Caco-2 (cell line): ENCODE measurements at regions of chr11 and their contacts with region 1.

Region 1: DNA sequence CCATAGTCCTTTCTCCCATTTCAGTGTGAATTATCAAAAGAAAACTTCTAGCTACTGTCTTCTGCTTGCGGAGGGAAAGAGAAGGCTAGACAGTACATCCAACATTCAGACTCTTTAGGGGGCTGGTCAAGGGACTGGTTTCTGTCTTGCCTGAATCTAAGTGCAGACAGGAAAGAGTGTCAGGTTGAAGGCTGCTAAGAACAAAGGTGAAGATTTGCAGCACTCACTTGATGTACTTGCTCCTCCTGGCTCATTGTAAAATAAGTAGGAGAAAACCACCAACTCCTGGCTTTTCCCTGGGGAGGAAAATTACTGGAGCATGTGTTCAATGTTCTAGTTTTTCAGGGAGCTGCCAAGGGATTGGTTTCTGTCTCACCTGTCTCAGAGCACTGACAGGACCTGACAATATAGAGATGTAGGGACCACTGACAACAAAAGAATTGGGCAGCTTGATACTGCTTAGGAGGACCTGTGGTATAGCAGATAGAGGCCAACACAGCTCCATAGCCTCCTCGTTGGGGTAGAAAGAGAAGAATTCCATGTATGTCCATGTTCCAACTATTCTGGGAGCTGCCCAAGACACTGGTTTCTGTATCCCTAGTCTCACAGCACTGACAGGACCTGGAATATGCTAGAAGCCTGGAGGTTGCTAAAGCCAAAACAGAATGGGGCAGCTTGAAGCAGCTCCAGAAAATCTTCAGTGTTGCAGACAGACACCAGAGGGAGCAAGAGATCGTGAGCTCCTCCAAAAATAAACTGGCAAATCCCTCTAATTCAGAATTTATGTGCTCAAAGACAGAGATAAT is 39.7 kb upstream of the MMP12 start:
- DNase-seq: peak in 1 of 2 experiments; percentile 58
- H3K4me3 ChIP-seq: no peak overlapping the region
- H3K4me3 Mint-ChIP-seq: no peak overlapping the region
- H3K27ac Mint-ChIP-seq: no peak overlapping the region
- H3K4me1 ChIP-seq: no peaks in the 10 kb centered on the region
- H3K4me1 Mint-ChIP-seq: no peaks in the 10 kb centered on the region
- H3K27me3 ChIP-seq: no peaks in the 10 kb centered on the region
- H3K27me3 Mint-ChIP-seq: no peaks in the 10 kb centered on the region
- CTCF ChIP-seq: peak; percentile 79 to 88

Region 2: DNA sequence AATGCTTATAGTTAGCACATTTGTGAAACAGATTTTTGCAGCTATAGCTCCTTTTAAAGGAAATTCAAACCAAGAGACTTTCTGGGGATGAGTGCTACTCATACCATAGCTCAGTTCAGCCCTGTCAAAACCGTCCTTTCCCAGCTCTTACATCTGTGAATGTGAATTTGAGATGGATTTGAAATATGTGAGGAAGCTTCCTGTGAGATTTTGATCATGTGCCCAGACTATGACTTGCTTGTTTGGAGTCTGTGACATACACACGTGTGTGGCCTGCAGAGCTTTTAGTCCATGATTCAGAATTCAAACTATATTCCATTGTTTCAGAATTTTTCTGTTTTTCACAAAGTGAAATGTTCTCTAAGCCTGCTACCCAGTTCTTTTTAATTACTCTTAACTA is 112.1 kb before region 1 on chr11:
- CTCF ChIA-PET with region 1: no interaction called
- POLR2A ChIA-PET with region 1: no interaction called
- intact Hi-C with region 1: no loop called
- DNase-seq: no peak
- H3K4me3 ChIP-seq: no peak overlapping the region
- H3K4me3 Mint-ChIP-seq: no peak overlapping the region
- H3K27ac Mint-ChIP-seq: no peak overlapping the region
- H3K4me1 ChIP-seq: 0 out of 2 replicates have a peak, but pooled peaks cover 5% of the 10 kb centered on the region
- H3K4me1 Mint-ChIP-seq: peaks cover 6% of the 10 kb centered on the region
- H3K27me3 ChIP-seq: no peaks in the 10 kb centered on the region
- H3K27me3 Mint-ChIP-seq: no peaks in the 10 kb centered on the region
- CTCF ChIP-seq: no peak

Region 3: DNA sequence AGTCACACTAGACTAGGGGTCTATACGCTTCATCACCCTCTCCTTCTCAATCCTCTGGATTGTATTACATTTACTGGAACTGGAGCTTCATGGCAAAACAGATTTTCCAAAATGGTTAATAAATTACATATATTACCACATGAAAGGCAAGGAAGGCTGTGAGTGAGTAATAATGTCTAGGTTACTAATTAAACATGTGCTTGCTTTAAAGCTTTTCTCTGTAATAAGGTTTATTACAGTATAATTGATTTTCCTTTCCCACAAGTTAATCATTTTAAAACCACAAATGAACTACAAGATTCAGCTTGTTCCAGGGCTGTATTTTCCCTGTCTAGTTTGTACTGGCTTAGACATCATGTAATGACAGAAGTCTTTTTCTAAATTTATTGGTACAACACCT is 15.5 kb after region 1 on chr11:
- CTCF ChIA-PET with region 1: interaction called, 14 read pairs
- POLR2A ChIA-PET with region 1: interaction called, 3 read pairs
- intact Hi-C with region 1: no loop called
- DNase-seq: no peak
- H3K4me3 ChIP-seq: no peak overlapping the region
- H3K4me3 Mint-ChIP-seq: no peak overlapping the region
- H3K27ac Mint-ChIP-seq: no peak overlapping the region
- H3K4me1 ChIP-seq: peaks cover 7% of the 10 kb centered on the region; the same call in 1 of the 2 replicates
- H3K4me1 Mint-ChIP-seq: no peaks in the 10 kb centered on the region
- H3K27me3 ChIP-seq: no peaks in the 10 kb centered on the region
- H3K27me3 Mint-ChIP-seq: no peaks in the 10 kb centered on the region
- CTCF ChIP-seq: no peak